ENCODE measurements at regions of chr5 and their contacts with region 1.

Region 1: GRCh38 chr5:132064738-132065331 is 4.4 kb downstream of the IL3 start:
- DNase-seq: peak; percentile 90
- H3K4me3 Mint-ChIP-seq: peak overlapping the region; percentile 11
- H3K27ac Mint-ChIP-seq: peak overlapping the region; percentile 7
- H3K4me1 Mint-ChIP-seq: peaks cover 22% of the 10 kb centered on the region
- H3K27me3 Mint-ChIP-seq: no peaks in the 10 kb centered on the region

Region 2: DNA sequence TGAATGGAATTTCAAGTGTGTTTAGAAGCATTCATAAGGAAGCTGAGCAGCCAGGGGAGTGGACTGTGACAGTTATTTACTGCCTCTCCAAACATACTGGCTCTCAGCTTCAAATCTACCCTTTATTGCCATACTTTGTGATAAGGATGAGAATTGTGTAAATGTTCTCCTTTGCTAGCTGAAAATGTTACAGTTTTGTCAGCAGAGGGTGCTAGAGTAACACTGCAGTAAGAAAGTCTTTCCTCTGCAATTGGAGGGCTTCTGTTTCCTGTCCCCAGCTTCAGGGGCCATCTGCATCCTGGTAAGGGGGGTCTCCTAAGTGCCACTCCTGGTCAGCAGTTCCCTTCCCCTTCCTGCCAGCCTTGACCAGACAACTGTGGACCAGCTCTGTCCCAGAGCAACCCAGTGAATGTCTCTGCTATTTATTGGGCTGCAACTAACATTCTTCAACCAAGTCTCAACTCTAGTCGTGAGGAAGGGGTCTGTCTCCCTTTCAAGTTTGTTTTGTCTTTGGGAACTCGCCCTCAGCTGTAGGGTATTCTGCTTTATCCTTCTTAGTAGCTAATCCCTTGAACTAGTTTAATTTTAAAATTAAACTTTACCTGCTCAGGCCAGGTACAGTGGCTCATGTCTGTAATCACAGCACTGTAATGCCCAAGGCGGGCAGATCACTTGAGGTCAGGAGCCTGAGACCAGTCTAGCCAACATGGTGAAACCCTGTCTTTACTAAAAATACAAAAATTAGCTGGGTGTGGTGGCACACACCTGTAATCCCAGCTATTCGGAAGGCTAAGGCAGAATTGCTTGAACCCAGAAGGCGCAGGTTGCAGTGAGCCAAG is 475.1 kb before region 1 on chr5:
- CTCF ChIA-PET with region 1: interaction called, 26 read pairs
- POLR2A ChIA-PET with region 1: no interaction called
- intact Hi-C with region 1: loop called (anchors 1 kb)
- DNase-seq: peak; percentile 12
- H3K4me3 Mint-ChIP-seq: no peak overlapping the region
- H3K27ac Mint-ChIP-seq: no peak overlapping the region
- H3K4me1 Mint-ChIP-seq: peaks cover 35% of the 10 kb centered on the region
- H3K27me3 Mint-ChIP-seq: no peaks in the 10 kb centered on the region

Region 3: DNA sequence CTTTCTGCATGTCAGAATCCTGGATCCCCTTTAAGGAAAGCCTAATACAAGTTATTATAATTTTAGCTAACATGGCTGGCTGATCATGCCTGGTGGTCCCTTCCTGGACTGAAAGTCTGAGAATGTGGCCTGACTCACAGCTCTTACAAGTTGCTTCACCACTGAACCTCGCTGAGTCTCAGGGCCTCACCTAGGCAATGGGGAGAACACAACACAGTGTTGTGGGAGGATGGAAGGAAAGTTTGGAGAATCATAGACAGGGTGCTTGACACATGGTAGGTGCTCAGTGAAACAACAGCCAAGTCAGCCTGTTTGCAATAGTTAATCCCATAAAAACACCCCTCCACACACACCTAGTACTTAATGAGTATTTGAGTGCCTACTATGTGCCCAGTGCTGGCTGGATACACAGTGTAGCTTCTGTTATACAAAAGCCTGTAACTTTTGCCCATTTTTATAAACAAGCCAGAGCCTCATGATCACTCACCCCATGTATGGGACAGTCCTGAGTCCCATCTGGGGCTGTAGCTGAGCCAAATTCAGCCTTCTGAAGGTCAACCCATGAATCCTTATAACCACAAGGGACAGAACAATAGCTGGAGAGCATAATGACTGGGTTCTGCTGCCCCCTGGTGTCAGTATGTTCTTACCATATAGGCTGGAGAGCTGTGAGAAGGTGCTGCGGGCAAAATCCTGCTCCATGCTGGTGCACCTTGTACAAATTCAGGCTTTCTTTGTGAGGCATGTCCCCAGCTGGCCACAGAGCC is 57.3 kb before region 1 on chr5:
- CTCF ChIA-PET with region 1: interaction called, 23 read pairs
- POLR2A ChIA-PET with region 1: no interaction called
- intact Hi-C with region 1: loop called (anchors 5 kb)
- DNase-seq: peak; percentile 85
- H3K4me3 Mint-ChIP-seq: no peak overlapping the region
- H3K27ac Mint-ChIP-seq: no peak overlapping the region
- H3K4me1 Mint-ChIP-seq: peaks cover 23% of the 10 kb centered on the region
- H3K27me3 Mint-ChIP-seq: peaks cover 17% of the 10 kb centered on the region

Region 4: GRCh38 chr5:132050136-132050535 is 14.7 kb before region 1 on chr5:
- CTCF ChIA-PET with region 1: interaction called, 35 read pairs
- POLR2A ChIA-PET with region 1: no interaction called
- intact Hi-C with region 1: no loop called
- DNase-seq: no peak
- H3K4me3 Mint-ChIP-seq: no peak overlapping the region
- H3K27ac Mint-ChIP-seq: no peak overlapping the region
- H3K4me1 Mint-ChIP-seq: peaks cover 8% of the 10 kb centered on the region
- H3K27me3 Mint-ChIP-seq: no peaks in the 10 kb centered on the region

Region 5: DNA sequence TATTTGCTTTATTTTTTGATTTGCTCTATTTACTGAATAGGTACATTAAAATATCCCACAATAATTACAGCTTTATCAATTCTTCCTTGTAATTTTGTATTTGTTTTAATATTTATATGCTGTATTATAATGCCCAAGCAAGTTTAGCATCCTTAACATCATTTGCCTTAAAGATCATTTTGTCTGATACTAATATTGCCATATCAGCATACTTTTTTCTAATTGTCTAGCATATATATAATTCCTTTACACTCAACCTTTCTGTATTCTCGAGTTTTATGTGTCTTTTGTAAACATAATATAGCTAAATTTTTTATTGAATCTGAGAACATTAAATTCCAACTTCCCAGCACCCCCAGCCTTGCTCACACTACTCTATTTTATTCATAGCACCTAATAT is 98.1 kb after region 1 on chr5:
- CTCF ChIA-PET with region 1: no interaction called
- POLR2A ChIA-PET with region 1: no interaction called
- intact Hi-C with region 1: no loop called
- DNase-seq: no peak
- H3K4me3 Mint-ChIP-seq: no peak overlapping the region
- H3K27ac Mint-ChIP-seq: no peak overlapping the region
- H3K4me1 Mint-ChIP-seq: no peaks in the 10 kb centered on the region
- H3K27me3 Mint-ChIP-seq: peaks cover 4% of the 10 kb centered on the region

Region 6: GRCh38 chr5:132180134-132180745 is 115.4 kb after region 1 on chr5:
- CTCF ChIA-PET with region 1: interaction called, 16 read pairs
- POLR2A ChIA-PET with region 1: no interaction called
- intact Hi-C with region 1: loop called (anchors 1 kb)
- DNase-seq: no peak
- H3K4me3 Mint-ChIP-seq: no peak overlapping the region
- H3K27ac Mint-ChIP-seq: peak overlapping the region; percentile 1
- H3K4me1 Mint-ChIP-seq: peaks cover 32% of the 10 kb centered on the region
- H3K27me3 Mint-ChIP-seq: no peaks in the 10 kb centered on the region

Region 7: GRCh38 chr5:132238169-132238744 is 173.4 kb after region 1 on chr5:
- CTCF ChIA-PET with region 1: interaction called, 23 read pairs
- POLR2A ChIA-PET with region 1: no interaction called
- intact Hi-C with region 1: loop called (anchors 2 kb)
- DNase-seq: peak; percentile 83
- H3K4me3 Mint-ChIP-seq: no peak overlapping the region
- H3K27ac Mint-ChIP-seq: no peak overlapping the region
- H3K4me1 Mint-ChIP-seq: no peaks in the 10 kb centered on the region
- H3K27me3 Mint-ChIP-seq: peaks cover 3% of the 10 kb centered on the region

Region 8: GRCh38 chr5:132500931-132501630 is 436.2 kb after region 1 on chr5:
- CTCF ChIA-PET with region 1: interaction called, 9 read pairs
- POLR2A ChIA-PET with region 1: no interaction called
- intact Hi-C with region 1: loop called (anchors 2 kb)
- DNase-seq: peak; percentile 83
- H3K4me3 Mint-ChIP-seq: no peak overlapping the region
- H3K27ac Mint-ChIP-seq: peak overlapping the region; percentile 43
- H3K4me1 Mint-ChIP-seq: peaks cover 20% of the 10 kb centered on the region
- H3K27me3 Mint-ChIP-seq: peaks cover 3% of the 10 kb centered on the region

Measured in activated CD4-positive, alpha-beta memory T cell treated with anti-CD3 and anti-CD28 coated beads for 36 hours (primary cell).